MCF 10A (cell line): ENCODE measurements at regions of chr15 and their contacts with region 1.

Region 1: GRCh38 chr15:89177633-89178306 is 43.6 kb downstream of the RLBP1 start:
- DNase-seq: peak; percentile 74
- H3K4me3 Mint-ChIP-seq: no peak overlapping the region
- H3K27ac Mint-ChIP-seq: no peak overlapping the region
- H3K4me1 Mint-ChIP-seq: peaks cover 7% of the 10 kb centered on the region
- H3K27me3 Mint-ChIP-seq: no peaks in the 10 kb centered on the region
- CTCF ChIP-seq: peak; percentile 66

Region 2: GRCh38 chr15:88904624-88905327 is 273.0 kb before region 1 on chr15:
- CTCF ChIA-PET with region 1: interaction called, 37 read pairs
- POLR2A ChIA-PET with region 1: no interaction called
- intact Hi-C with region 1: loop called (anchors 2 kb)
- DNase-seq: peak; percentile 80
- H3K4me3 Mint-ChIP-seq: no peak overlapping the region
- H3K27ac Mint-ChIP-seq: no peak overlapping the region
- H3K4me1 Mint-ChIP-seq: peaks cover 20% of the 10 kb centered on the region
- H3K27me3 Mint-ChIP-seq: no peaks in the 10 kb centered on the region
- CTCF ChIP-seq: peak; percentile 95

Region 3: GRCh38 chr15:89034288-89034687 is 143.5 kb before region 1 on chr15:
- CTCF ChIA-PET with region 1: interaction called, 14 read pairs
- POLR2A ChIA-PET with region 1: interaction called, 10 read pairs
- intact Hi-C with region 1: no loop called
- DNase-seq: peak; percentile 33
- H3K4me3 Mint-ChIP-seq: no peak overlapping the region
- H3K27ac Mint-ChIP-seq: no peak overlapping the region
- H3K4me1 Mint-ChIP-seq: no peaks in the 10 kb centered on the region
- H3K27me3 Mint-ChIP-seq: peaks cover 32% of the 10 kb centered on the region
- CTCF ChIP-seq: no peak

Region 4: GRCh38 chr15:89087830-89088604 is 89.8 kb before region 1 on chr15 and contains the start of gene ABHD2:
- CTCF ChIA-PET with region 1: interaction called, 24 read pairs
- POLR2A ChIA-PET with region 1: interaction called, 10 read pairs
- intact Hi-C with region 1: no loop called
- DNase-seq: peak; percentile 100
- H3K4me3 Mint-ChIP-seq: no peak within 1 kb of the TSS
- H3K27ac Mint-ChIP-seq: peak within 1 kb of the TSS; percentile 97
- H3K4me1 Mint-ChIP-seq: peaks cover 22% of the 10 kb centered on the region
- H3K27me3 Mint-ChIP-seq: no peaks in the 10 kb centered on the region
- CTCF ChIP-seq: no peak
- total RNA-seq, gene ABHD2: 47.7 and 55.9 TPM in 2 replicates

Region 5: DNA sequence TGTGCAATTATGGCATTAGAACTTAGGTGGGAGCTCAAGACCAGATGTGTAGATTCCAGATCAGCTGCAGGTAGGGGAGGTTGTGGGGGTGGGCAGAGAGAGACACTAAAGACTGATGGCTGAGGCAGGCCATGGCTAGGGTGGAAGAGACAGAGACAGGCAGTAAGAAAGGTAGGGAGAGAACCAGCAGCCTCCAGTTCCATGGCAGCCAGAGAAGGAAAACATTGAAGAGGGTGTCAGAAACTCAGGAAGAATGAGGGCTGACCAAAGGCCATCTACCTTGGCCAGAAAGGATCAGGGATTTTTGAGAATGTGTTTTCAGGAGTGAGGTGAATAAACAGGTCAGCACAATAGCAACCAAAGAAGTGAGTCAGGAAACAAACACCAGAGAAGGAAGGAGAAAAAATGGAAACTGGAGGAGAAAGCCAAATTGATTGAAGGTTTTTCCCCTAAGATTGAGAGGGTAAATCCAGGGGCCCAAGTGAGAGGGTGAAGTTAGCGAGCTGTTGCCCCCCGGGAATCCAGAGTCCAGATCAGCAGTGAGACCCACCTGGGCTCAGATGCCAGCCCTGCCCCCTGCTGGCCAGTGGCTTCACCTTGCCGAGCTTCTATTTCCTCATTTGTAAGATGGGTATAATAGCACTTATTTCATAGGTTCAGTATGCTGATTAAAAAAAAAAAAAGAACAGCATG is 48.5 kb before region 1 on chr15:
- CTCF ChIA-PET with region 1: interaction called, 38 read pairs
- POLR2A ChIA-PET with region 1: interaction called, 3 read pairs
- intact Hi-C with region 1: loop called (anchors 2 kb)
- DNase-seq: peak; percentile 60
- H3K4me3 Mint-ChIP-seq: no peak overlapping the region
- H3K27ac Mint-ChIP-seq: no peak overlapping the region
- H3K4me1 Mint-ChIP-seq: peaks cover 5% of the 10 kb centered on the region
- H3K27me3 Mint-ChIP-seq: no peaks in the 10 kb centered on the region
- CTCF ChIP-seq: peak; percentile 65

Region 6: DNA sequence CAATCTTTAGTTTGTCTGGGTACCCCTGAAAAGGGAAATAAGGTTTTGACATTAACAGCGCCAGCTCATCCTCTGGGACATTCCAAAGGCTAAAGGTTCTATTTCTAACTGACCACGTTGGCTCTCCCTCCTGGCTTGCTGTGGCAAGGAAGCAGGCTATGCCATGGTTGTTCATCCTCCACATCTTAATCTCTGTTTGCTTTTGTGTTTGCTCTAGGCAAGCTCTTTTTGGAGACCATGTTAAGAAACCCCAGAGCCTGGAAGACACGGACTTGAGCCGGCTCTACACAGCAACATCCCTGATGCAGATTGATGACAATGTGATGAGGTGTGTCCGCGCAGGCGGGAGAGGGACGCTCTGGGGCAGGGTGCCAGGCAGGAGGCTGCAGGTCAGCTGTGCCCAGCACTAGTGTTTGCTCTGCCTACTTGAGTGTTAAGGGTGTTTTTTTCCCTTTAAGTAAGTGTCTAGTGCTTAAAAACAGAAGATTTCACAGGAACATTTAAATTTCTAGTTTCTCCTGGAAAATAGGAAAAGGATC is 10.3 kb after region 1 on chr15:
- CTCF ChIA-PET with region 1: interaction called, 20 read pairs
- POLR2A ChIA-PET with region 1: no interaction called
- intact Hi-C with region 1: no loop called
- DNase-seq: no peak
- H3K4me3 Mint-ChIP-seq: no peak overlapping the region
- H3K27ac Mint-ChIP-seq: no peak overlapping the region
- H3K4me1 Mint-ChIP-seq: no peaks in the 10 kb centered on the region
- H3K27me3 Mint-ChIP-seq: no peaks in the 10 kb centered on the region
- CTCF ChIP-seq: no peak

Region 7: DNA sequence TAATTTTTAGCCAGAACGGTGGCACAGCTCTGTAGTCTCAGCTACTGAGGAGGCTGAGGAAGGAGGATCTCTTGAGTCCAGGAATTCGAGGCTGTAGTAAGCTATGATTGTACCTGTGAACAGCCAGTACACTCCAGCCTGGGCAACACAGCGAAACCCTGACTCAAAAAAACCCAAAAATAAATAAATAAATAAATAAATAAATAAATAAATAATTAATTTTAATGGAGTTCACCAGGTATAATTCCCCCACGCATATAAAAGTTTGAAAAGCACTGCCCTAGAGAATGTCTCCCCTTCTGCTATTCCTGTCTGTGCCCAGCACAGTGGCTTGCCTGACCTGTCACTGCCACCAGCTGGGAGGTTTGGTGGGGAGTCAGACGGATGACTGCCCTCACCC is 47.8 kb after region 1 on chr15:
- CTCF ChIA-PET with region 1: no interaction called
- POLR2A ChIA-PET with region 1: no interaction called
- intact Hi-C with region 1: no loop called
- DNase-seq: no peak
- H3K4me3 Mint-ChIP-seq: no peak overlapping the region
- H3K27ac Mint-ChIP-seq: no peak overlapping the region
- H3K4me1 Mint-ChIP-seq: peaks cover 2% of the 10 kb centered on the region
- H3K27me3 Mint-ChIP-seq: no peaks in the 10 kb centered on the region
- CTCF ChIP-seq: no peak